ENCODE measurements at regions of chr11 and their contacts with region 1.

Region 1: GRCh38 chr11:69888483-69889076 is 69.4 kb upstream of the FGF3 start:
- DNase-seq: peak; percentile 61 to 86
- ATAC-seq: peak; percentile 50

Region 2: GRCh38 chr11:69683764-69684333 is 204.7 kb before region 1 on chr11:
- intact Hi-C with region 1: loop called in 1 of 2 experiments (anchors 2 kb)
- DNase-seq: peak in 1 of 2 donors; percentile 47
- ATAC-seq: peak; percentile 54

Region 3: GRCh38 chr11:69704508-69705253 is 183.9 kb before region 1 on chr11:
- intact Hi-C with region 1: no loop called
- DNase-seq: peak in 1 of 2 donors; percentile 39
- ATAC-seq: peak; percentile 64

Region 4: GRCh38 chr11:69721745-69722144 is 166.8 kb before region 1 on chr11:
- intact Hi-C with region 1: loop called in 1 of 2 experiments (anchors 10 kb)
- DNase-seq: peak in 1 of 2 donors; percentile 34
- ATAC-seq: peak; percentile 86

Region 5: GRCh38 chr11:70048279-70049027 is 159.9 kb after region 1 on chr11:
- intact Hi-C with region 1: no loop called
- DNase-seq: peak; percentile 30 to 47
- ATAC-seq: peak; percentile 84